ENCODE measurements at regions of chr9 and their contacts with region 1.

Region 1: GRCh38 chr9:121598965-121599871 is 52.2 kb upstream of the DAB2IP start:
- DNase-seq: no peak
- H3K4me3 ChIP-seq: peak overlapping the region in 2 of 3 experiments; percentile 21 to 37
- H3K27ac ChIP-seq: no peak overlapping the region
- H3K4me1 ChIP-seq: peaks cover 4% of the 10 kb centered on the region
- H3K27me3 ChIP-seq: peaks cover 39 to 44% of the 10 kb centered on the region in 2 experiments
- CTCF ChIP-seq: no peak
- POLR2A ChIP-seq: no peak

Region 2: DNA sequence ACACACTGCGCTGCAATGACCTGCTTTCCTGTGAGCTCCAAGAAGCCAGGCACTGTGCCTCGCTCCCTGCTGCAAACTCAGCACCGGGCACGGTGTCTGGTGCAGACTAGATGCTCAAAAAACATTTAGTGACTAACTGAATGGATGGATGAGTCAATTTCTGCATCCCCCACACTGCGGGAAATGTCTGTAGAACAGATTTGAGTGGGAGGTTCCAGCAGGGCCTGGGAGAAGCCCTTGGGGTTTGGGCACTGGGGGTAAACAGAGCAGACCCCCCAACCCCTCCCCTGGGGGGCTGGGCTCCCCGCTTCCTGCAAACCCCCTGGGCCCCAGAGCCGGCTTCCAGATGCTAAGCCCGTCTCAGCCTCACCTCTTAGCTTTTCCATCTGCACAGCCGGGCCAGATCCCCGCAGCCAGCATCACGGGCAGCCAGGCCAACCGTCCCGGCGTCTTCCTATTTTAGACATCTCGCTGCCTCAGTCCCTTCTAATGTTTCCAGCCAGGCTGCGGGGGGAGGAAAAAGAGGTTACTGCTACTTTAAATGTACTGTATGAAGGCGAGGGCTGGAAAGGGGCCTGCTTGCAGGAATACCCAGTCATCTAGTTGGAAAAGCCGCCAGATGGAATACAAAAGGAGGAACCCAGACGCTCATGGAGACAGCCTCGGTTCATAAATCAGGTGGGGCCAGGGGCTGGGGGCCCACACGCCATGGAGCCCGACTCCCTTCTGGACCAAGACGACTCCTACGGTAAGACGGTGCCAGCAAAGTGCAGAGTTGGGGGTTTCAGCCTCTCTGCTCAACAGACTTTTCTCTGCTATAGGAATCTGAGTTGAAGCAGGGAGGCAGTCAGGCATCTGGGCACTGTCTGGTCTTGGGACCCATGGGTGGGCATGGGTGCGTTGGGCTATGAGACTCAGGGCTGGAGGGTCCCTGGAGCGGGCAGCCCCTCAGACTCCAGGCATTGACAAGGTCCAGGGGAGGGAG is 32.4 kb before region 1 on chr9:
- CTCF ChIA-PET with region 1: interaction called, 6 read pairs
- POLR2A ChIA-PET with region 1: no interaction called
- dilution Hi-C with region 1: no loop called
- intact Hi-C with region 1: loop called (anchors 1 kb)
- DNase-seq: peak; percentile 39
- H3K4me3 ChIP-seq: peak overlapping the region in 1 of 3 experiments; percentile 1
- H3K27ac ChIP-seq: no peak overlapping the region
- H3K4me1 ChIP-seq: peaks cover 32% of the 10 kb centered on the region
- H3K27me3 ChIP-seq: no peaks in the 10 kb centered on the region
- CTCF ChIP-seq: no peak
- POLR2A ChIP-seq: no peak